ENCODE measurements at regions of chr2 and their contacts with region 1.

Region 1: GRCh38 chr2:100957996-100958653 is 44.0 kb upstream of the RPL31 start:
- DNase-seq: peak; percentile 70 to 79
- ATAC-seq: peak; percentile 95 to 99
- H3K4me3 ChIP-seq: peak overlapping the region in 1 of 4 donors; percentile 28
- H3K27ac ChIP-seq: peak overlapping the region in 1 of 4 donors; percentile 23
- H3K4me1 ChIP-seq: peaks cover 14 to 17% of the 10 kb centered on the region in 2 donors
- H3K27me3 ChIP-seq: no peaks in the 10 kb centered on the region
- CTCF ChIP-seq: no peak
- POLR2A ChIP-seq: no peak

Region 2: DNA sequence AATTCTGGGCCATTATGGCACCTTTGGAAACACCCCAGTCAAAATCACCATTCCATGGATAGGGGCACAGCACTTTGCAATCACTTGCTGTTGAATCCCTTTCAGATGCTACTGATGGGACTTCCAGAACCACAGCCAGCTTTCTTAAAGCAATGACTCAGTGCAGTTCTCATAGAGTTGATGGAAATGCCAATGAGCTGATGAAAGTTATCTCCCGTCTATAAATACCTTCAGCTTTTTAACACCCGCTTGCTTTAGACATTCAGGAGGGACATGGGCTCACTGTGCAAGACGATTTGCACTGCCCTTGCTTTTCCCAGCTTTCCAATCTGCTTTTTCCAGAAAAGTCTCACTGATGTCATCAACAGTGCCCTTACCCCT is 22.8 kb before region 1 on chr2:
- in situ Hi-C with region 1: no loop called
- intact Hi-C with region 1: loop called (anchors 2 kb)
- DNase-seq: no peak
- ATAC-seq: peak; percentile 78 to 84
- H3K4me3 ChIP-seq: no peak overlapping the region
- H3K27ac ChIP-seq: peak overlapping the region in 1 of 4 donors; percentile 25
- H3K4me1 ChIP-seq: peaks cover 15 to 21% of the 10 kb centered on the region in 2 donors
- H3K27me3 ChIP-seq: no peaks in the 10 kb centered on the region
- CTCF ChIP-seq: no peak
- POLR2A ChIP-seq: no peak

Measured in gastrocnemius medialis (tissue), 4 donors.